Activated CD4-positive, alpha-beta memory T cell treated with anti-CD3 and anti-CD28 coated beads for 36 hours (primary cell): ENCODE measurements at regions of chr1 and their contacts with region 1.

Region 1: GRCh38 chr1:225962440-225962975 is 21.5 kb upstream of the LEFTY2 start:
- DNase-seq: peak; percentile 75
- H3K4me3 Mint-ChIP-seq: no peak overlapping the region
- H3K27ac Mint-ChIP-seq: no peak overlapping the region
- H3K4me1 Mint-ChIP-seq: peaks cover 2% of the 10 kb centered on the region
- H3K27me3 Mint-ChIP-seq: no peaks in the 10 kb centered on the region

Region 2: GRCh38 chr1:225412803-225413351 is 549.6 kb before region 1 on chr1:
- CTCF ChIA-PET with region 1: no interaction called
- POLR2A ChIA-PET with region 1: no interaction called
- intact Hi-C with region 1: no loop called
- DNase-seq: no peak
- H3K4me3 Mint-ChIP-seq: no peak overlapping the region
- H3K27ac Mint-ChIP-seq: no peak overlapping the region
- H3K4me1 Mint-ChIP-seq: no peaks in the 10 kb centered on the region
- H3K27me3 Mint-ChIP-seq: no peaks in the 10 kb centered on the region

Region 3: DNA sequence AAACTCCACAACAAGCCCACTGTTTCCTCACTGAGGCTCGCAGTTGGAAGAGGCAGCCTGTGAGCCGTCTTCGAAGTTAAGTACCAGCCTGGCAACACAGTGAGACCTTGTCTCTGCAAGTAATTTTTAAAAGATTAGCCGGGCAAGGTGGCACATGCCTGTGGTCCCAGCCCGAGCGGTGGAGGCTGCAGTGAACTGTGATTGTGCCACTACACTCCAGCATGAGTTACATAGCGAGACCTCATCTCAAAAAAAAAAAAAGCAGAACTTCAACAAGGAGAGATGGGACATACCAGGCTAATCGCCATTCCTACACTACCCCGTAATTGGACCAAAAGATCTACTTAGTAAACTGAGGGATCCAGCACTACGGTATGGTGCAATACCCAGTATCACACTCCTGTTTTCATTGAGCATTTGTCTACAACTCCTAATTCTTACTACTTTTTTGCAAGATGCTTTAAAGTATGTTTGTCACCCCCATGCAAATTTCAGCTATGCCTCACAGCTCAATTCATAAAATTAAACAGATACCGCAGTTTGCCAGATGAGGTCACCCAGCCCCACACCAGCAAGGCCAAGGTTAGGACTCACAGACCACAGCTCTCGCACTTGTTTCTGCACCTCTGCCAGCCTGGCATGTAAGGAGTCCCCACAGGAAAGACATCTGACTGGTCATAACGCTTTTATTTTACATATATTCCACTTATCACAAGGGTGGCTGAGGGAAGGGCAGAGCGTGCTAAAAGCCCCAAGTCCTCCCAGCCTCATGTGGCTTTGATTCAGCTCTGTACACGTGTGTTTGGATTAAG is 15.6 kb after region 1 on chr1:
- CTCF ChIA-PET with region 1: interaction called, 30 read pairs
- POLR2A ChIA-PET with region 1: no interaction called
- intact Hi-C with region 1: no loop called
- DNase-seq: no peak
- H3K4me3 Mint-ChIP-seq: no peak overlapping the region
- H3K27ac Mint-ChIP-seq: no peak overlapping the region
- H3K4me1 Mint-ChIP-seq: peaks cover 7% of the 10 kb centered on the region
- H3K27me3 Mint-ChIP-seq: no peaks in the 10 kb centered on the region

Region 4: GRCh38 chr1:225987491-225988316 is 25.2 kb after region 1 on chr1:
- CTCF ChIA-PET with region 1: interaction called, 30 read pairs
- POLR2A ChIA-PET with region 1: interaction called, 3 read pairs
- intact Hi-C with region 1: no loop called
- DNase-seq: no peak
- H3K4me3 Mint-ChIP-seq: no peak overlapping the region
- H3K27ac Mint-ChIP-seq: peak overlapping the region; percentile 19
- H3K4me1 Mint-ChIP-seq: peaks cover 29% of the 10 kb centered on the region
- H3K27me3 Mint-ChIP-seq: no peaks in the 10 kb centered on the region

Region 5: DNA sequence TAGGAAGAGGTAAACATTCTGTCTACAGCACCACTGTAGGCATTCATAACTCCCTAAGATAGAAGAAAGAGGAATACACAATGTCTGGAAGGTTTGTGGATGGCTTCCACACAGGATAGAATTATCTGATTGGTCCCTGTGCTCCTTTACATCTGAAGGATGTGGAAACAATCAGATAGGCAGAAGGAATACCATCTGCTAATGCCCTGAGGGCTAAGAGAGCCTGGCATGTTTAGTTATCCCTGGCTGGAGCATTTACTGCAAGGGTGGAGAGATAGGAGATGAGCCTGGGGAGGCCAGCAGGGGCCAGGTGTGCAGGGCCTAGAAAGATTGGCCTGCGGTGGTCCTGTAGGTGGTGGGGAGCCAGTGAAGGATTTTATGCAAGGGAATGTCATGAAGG is 232.6 kb after region 1 on chr1:
- CTCF ChIA-PET with region 1: interaction called, 3 read pairs
- POLR2A ChIA-PET with region 1: no interaction called
- intact Hi-C with region 1: loop called (anchors 5 kb)
- DNase-seq: no peak
- H3K4me3 Mint-ChIP-seq: no peak overlapping the region
- H3K27ac Mint-ChIP-seq: no peak overlapping the region
- H3K4me1 Mint-ChIP-seq: peaks cover 2% of the 10 kb centered on the region
- H3K27me3 Mint-ChIP-seq: peaks cover 3% of the 10 kb centered on the region